ENCODE measurements at regions of chr11 and their contacts with region 1.

Region 1: DNA sequence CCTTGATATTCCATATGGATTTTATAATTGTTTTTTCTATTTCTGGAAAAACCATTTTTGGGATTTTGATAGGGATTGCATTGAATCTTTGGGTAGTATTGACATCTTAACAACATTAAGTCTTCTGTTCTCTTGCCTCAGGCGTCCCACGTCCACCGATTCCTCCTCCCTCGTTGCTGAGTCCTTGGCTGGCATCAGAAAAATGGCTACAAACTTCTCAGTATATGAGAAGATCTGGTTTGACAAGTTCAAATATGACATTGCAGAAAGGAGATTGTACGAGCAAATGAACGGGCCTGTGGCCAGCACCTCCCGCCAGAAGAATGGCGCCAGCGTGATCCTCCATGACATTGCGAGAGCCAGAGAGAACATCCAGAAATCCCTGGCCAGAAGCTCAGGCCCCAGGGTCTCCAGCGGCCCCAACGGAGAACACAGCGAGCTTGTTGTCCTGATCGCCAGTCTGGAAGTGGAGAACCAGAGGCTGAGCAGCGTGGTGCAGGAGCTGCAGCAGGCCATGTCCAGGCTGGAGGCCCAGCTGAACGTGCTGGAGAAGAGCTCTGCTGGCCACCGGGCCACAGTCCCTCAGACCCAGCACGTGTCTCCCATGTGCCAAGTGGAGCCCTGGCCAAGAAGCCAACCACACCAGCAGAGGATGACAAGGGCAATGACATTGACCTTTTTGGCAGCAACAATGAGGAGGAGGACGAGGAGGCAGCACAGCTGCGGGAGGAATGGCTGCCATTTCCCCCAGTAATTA is 20.7 kb upstream of the SCGB1D1 start:
- DNase-seq: no peak
- H3K4me3 ChIP-seq: no peak overlapping the region
- H3K27ac ChIP-seq: no peak overlapping the region
- H3K4me1 ChIP-seq: no peaks in the 10 kb centered on the region
- H3K27me3 ChIP-seq: peaks cover 0 to under 1% (median 0%) of the 10 kb centered on the region in 3 donors
- CTCF ChIP-seq: no peak
- EP300 ChIP-seq: no peak
- POLR2A ChIP-seq: no peak

Region 2: GRCh38 chr11:61747192-61747966 is 421.9 kb before region 1 on chr11:
- intact Hi-C with region 1: no loop called
- DNase-seq: peak; percentile 86
- H3K4me3 ChIP-seq: no peak overlapping the region
- H3K27ac ChIP-seq: no peak overlapping the region
- H3K4me1 ChIP-seq: peaks cover 0 to 5% (median 2%) of the 10 kb centered on the region in 4 donors
- H3K27me3 ChIP-seq: peaks cover 0 to 20% (median 5%) of the 10 kb centered on the region in 3 donors
- CTCF ChIP-seq: peak; percentile 44 to 80 (median 75)
- EP300 ChIP-seq: no peak
- POLR2A ChIP-seq: no peak

Region 3: DNA sequence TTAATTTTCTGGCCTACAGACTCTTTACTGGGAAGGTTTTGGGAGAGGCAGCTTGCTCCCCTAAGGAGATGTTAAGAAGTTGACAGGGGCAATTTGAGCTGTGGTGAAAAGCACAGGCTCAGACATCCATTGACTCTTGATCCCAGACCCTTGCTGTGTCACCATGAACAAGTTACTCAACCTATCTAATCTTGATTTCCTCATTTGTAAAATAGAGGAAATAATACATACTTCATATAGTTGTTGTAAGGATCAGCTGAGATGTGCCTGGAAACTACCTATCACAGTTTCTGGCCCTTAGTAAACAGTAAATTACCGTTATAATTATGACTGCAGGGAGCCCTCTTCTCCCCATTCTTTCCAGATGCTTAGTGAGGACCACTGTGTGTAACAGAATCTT is 146.2 kb after region 1 on chr11:
- intact Hi-C with region 1: loop called (anchors 1 kb)
- DNase-seq: no peak
- H3K4me3 ChIP-seq: no peak overlapping the region
- H3K27ac ChIP-seq: no peak overlapping the region
- H3K4me1 ChIP-seq: peaks cover 0 to 5% (median 0%) of the 10 kb centered on the region in 4 donors
- H3K27me3 ChIP-seq: peaks cover 0 to 17% (median 0%) of the 10 kb centered on the region in 3 donors
- CTCF ChIP-seq: no peak
- EP300 ChIP-seq: no peak
- POLR2A ChIP-seq: no peak

Region 4: GRCh38 chr11:62372871-62373270 is 203.6 kb after region 1 on chr11:
- intact Hi-C with region 1: loop called (anchors 5 kb)
- DNase-seq: no peak
- H3K4me3 ChIP-seq: no peak overlapping the region
- H3K27ac ChIP-seq: no peak overlapping the region
- H3K4me1 ChIP-seq: no peaks in the 10 kb centered on the region
- H3K27me3 ChIP-seq: no peaks in the 10 kb centered on the region
- CTCF ChIP-seq: no peak
- EP300 ChIP-seq: no peak
- POLR2A ChIP-seq: no peak

Measured in sigmoid colon (tissue), 7 donors.